ENCODE measurements at regions of chr11 and their contacts with region 1.

Region 1: GRCh38 chr11:77053217-77054015 is 13.4 kb upstream of the CAPN5 start:
- DNase-seq: no peak
- ATAC-seq: no peak
- H3K4me3 ChIP-seq: no peak overlapping the region
- H3K27ac ChIP-seq: no peak overlapping the region
- H3K4me1 ChIP-seq: no peaks in the 10 kb centered on the region
- H3K27me3 ChIP-seq: no peaks in the 10 kb centered on the region
- CTCF ChIP-seq: no peak

Region 2: GRCh38 chr11:77091146-77091940 is 37.9 kb after region 1 on chr11:
- intact Hi-C with region 1: loop called in 2 of 3 experiments (anchors 5 kb)
- DNase-seq: peak; percentile 73 to 93 (median 86)
- ATAC-seq: peak; percentile 61 to 86 (median 83)
- H3K4me3 ChIP-seq: no peak overlapping the region
- H3K27ac ChIP-seq: no peak overlapping the region
- H3K4me1 ChIP-seq: peaks cover 0 to 30% (median 24%) of the 10 kb centered on the region in 3 donors
- H3K27me3 ChIP-seq: no peaks in the 10 kb centered on the region
- CTCF ChIP-seq: peak; percentile 85 to 94 (median 91)

Region 3: DNA sequence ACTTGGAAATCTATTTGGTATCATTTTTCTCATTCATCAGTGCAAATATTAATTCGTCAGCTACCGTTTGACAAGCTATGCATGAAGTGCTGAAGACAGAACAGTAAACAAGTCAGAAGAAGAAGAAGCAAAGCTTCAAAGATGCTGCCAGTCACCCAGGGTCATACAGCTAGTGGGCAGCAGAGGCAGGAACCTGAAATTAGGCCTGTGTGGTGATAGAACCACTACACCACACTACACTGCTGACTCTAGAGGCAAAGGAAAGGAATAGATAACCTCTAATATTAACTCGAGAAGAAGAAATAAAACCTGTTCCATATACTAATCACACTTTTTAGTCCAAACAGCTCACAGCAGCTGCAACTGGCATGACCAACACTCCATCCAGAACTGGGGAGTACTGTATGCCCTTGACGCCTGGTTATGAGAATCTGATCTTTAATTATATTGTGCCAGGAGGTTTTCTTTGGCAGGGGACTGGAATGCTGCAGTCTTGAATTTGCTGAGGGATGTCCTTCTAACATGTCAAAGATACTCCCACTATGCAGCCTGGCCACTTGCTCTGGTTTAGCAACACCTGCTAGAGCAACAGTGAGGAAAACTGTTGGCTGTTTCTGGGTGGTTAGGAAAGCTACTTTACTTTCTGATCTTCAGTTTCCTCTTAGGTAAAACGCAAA is 347.5 kb after region 1 on chr11:
- intact Hi-C with region 1: no loop called
- DNase-seq: no peak
- ATAC-seq: peak in 1 of 4 donors; percentile 21
- H3K4me3 ChIP-seq: no peak overlapping the region
- H3K27ac ChIP-seq: no peak overlapping the region
- H3K4me1 ChIP-seq: peaks cover 8 to 10% (median 9%) of the 10 kb centered on the region in 3 donors
- H3K27me3 ChIP-seq: no peaks in the 10 kb centered on the region
- CTCF ChIP-seq: no peak

Region 4: GRCh38 chr11:77530879-77531278 is 477.5 kb after region 1 on chr11:
- intact Hi-C with region 1: no loop called
- DNase-seq: no peak
- ATAC-seq: no peak
- H3K4me3 ChIP-seq: no peak overlapping the region
- H3K27ac ChIP-seq: no peak overlapping the region
- H3K4me1 ChIP-seq: no peaks in the 10 kb centered on the region
- H3K27me3 ChIP-seq: no peaks in the 10 kb centered on the region
- CTCF ChIP-seq: no peak

Measured in pancreas (tissue), 10 donors.